ENCODE measurements at regions of chr1 and their contacts with region 1.

Region 1: GRCh38 chr1:105793536-105794146 is 1262.8 kb upstream of the PRMT6 start:
- H3K4me3 ChIP-seq: no peak overlapping the region
- H3K27ac ChIP-seq: no peak overlapping the region
- H3K4me1 ChIP-seq: no peaks in the 10 kb centered on the region
- CTCF ChIP-seq: no peak

Region 2: DNA sequence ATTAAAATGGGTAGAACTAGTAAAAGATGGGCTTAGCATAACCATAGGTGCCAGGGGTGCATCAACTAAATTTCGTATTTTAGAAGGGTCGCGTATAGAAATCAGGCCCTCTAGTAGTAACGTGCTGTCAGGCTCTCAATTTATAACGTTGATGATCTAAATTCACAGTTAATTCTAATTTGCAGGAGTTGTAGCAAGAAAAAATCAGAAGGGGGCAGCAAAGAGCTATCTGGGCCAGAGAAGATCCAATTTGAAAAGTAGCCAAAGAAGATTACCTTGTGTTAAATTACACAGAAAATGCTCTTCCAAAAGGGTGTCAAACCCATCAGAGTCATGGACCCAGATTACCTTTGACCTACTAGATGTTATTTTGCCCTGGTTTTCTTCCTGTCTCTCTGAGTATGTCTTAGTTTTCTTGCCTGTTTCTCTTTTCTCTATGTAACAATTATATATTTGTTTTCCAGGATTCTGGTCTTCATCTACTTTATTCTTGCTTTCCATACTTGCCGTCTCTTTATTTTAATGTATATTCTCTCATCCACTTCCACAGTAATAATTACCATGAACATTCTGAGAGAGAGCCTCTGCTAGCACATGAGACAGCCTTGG is 1013.1 kb before region 1 on chr1:
- CTCF ChIA-PET with region 1: interaction called, 16 read pairs
- POLR2A ChIA-PET with region 1: no interaction called
- H3K4me3 ChIP-seq: no peak overlapping the region
- H3K27ac ChIP-seq: no peak overlapping the region
- H3K4me1 ChIP-seq: no peaks in the 10 kb centered on the region
- CTCF ChIP-seq: 0 out of 2 replicates have a peak, but pooled peaks have one; percentile 24

Region 3: GRCh38 chr1:105556266-105556665 is 237.4 kb before region 1 on chr1:
- CTCF ChIA-PET with region 1: no interaction called
- POLR2A ChIA-PET with region 1: no interaction called
- H3K4me3 ChIP-seq: no peak overlapping the region
- H3K27ac ChIP-seq: no peak overlapping the region
- H3K4me1 ChIP-seq: no peaks in the 10 kb centered on the region
- CTCF ChIP-seq: no peak

Measured in HEK293 (cell line).